ENCODE measurements at regions of chr12 and their contacts with region 1.

Region 1: DNA sequence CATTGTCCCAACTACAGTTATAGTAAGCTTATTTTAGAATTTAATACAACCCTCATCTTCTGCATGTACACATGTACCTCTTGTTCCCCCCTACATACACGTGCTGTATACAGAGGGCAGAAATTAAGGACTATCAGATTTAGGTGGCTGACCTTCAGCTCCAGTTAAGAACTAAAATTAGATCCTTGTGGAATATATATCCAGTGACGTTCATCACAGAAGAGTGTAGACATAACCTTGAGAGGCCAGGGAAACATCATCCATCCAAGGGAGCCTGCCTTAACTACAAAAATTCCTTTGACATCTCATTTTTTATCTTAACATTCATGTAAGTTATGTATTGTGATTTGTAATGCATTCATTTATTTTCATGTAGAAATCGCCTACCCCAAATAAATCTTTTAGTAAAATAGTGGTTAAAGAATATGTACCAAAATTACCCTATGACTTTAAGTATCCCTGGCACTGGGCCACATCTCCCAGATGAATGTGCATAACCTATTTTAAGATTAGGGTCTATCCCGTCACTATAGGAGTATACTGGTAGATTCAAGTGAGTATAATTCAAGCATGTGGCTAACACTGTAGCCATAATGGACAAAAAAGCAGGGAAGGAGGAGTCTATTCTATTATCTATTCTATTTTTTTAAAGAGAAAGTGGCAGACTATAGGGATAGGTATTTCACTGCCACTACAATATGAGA is 27.5 kb downstream of the RIC8B start:
- DNase-seq: no peak
- ATAC-seq: no peak
- H3K4me3 ChIP-seq: no peak overlapping the region
- H3K27ac ChIP-seq: no peak overlapping the region
- H3K4me1 ChIP-seq: no peaks in the 10 kb centered on the region
- H3K27me3 ChIP-seq: no peaks in the 10 kb centered on the region
- CTCF ChIP-seq: no peak
- POLR2A ChIP-seq: no peak
- RAD21 ChIP-seq: no peak

Region 2: DNA sequence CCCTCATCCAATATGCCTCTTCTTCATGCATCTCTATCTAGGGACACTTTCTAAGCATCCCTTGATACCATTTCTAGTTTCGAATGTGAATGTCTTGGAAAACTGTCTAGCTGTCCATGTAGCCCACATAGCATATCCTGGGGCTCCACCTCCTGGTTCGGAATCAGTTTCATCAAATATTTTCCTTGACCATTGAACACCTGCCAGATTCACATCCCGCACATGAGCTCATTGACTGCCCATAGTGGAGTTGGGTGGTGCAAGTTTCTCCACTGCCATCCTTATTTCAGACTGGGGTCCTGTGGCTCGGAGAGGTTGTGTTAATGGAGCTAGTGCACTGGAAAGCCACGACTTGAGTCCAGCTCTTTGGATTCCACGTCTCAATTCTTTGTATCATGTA is 95.1 kb after region 1 on chr12:
- CTCF ChIA-PET with region 1: no interaction called
- POLR2A ChIA-PET with region 1: no interaction called
- RAD21 ChIA-PET with region 1: no interaction called
- intact Hi-C with region 1: no loop called
- DNase-seq: peak; percentile 6
- ATAC-seq: peak; percentile 38; the same call in 1 of the 2 replicates
- H3K4me3 ChIP-seq: no peak overlapping the region
- H3K27ac ChIP-seq: no peak overlapping the region
- H3K4me1 ChIP-seq: peaks cover 0 to 7% of the 10 kb centered on the region in 2 experiments; a peak in 2 of 4 replicates
- H3K27me3 ChIP-seq: no peaks in the 10 kb centered on the region
- CTCF ChIP-seq: peak in 2 of 3 experiments; percentile 20 to 21; a peak in 2 of 6 replicates
- POLR2A ChIP-seq: no peak
- RAD21 ChIP-seq: peak; percentile 54

Region 3: GRCh38 chr12:107309020-107309419 is 507.0 kb after region 1 on chr12:
- CTCF ChIA-PET with region 1: no interaction called
- POLR2A ChIA-PET with region 1: no interaction called
- RAD21 ChIA-PET with region 1: no interaction called
- intact Hi-C with region 1: loop called (anchors 5 kb)
- DNase-seq: no peak
- ATAC-seq: no peak
- H3K4me3 ChIP-seq: no peak overlapping the region
- H3K27ac ChIP-seq: no peak overlapping the region
- H3K4me1 ChIP-seq: no peaks in the 10 kb centered on the region
- H3K27me3 ChIP-seq: no peaks in the 10 kb centered on the region; the same call in none of the 2 replicates
- CTCF ChIP-seq: no peak
- POLR2A ChIP-seq: no peak
- RAD21 ChIP-seq: no peak